ENCODE measurements at regions of chr12 and their contacts with region 1.

Region 1: GRCh38 chr12:71791473-71792150 is 36.9 kb downstream of the RAB21 start:
- DNase-seq: no peak
- H3K27ac ChIP-seq: no peak overlapping the region
- CTCF ChIP-seq: no peak

Region 2: GRCh38 chr12:71780237-71780822 is 11.3 kb before region 1 on chr12:
- CTCF ChIA-PET with region 1: interaction called, 10 read pairs
- POLR2A ChIA-PET with region 1: no interaction called
- DNase-seq: peak; percentile 36
- H3K27ac ChIP-seq: no peak overlapping the region
- CTCF ChIP-seq: peak; percentile 75

Measured in RWPE1 (cell line).